GM12878 (cell line): ENCODE measurements at regions of chr7 and their contacts with region 1.

Region 1: GRCh38 chr7:37201003-37201875 is 247.4 kb downstream of the ELMO1 start:
- DNase-seq: no peak
- ATAC-seq: peak; percentile 90
- H3K4me3 ChIP-seq: no peak overlapping the region
- H3K27ac ChIP-seq: no peak overlapping the region
- H3K4me1 ChIP-seq: 0 out of 2 replicates have a peak, but pooled peaks cover 3% of the 10 kb centered on the region
- H3K27me3 ChIP-seq: no peaks in the 10 kb centered on the region
- CTCF ChIP-seq: peak; percentile 76 to 85 (median 80)
- EP300 ChIP-seq: no peak
- POLR2A ChIP-seq: no peak
- RAD21 ChIP-seq: peak; percentile 69

Region 2: GRCh38 chr7:36440880-36441279 is 760.4 kb before region 1 on chr7:
- CTCF ChIA-PET with region 1: interaction called, 22 read pairs
- POLR2A ChIA-PET with region 1: no interaction called
- RAD21 ChIA-PET with region 1: interaction called, 4 read pairs
- SMC1A ChIA-PET with region 1: interaction called, 3 read pairs
- in situ Hi-C with region 1: no loop called
- intact Hi-C with region 1: no loop called
- DNase-seq: no peak
- ATAC-seq: no peak
- H3K4me3 ChIP-seq: no peak overlapping the region
- H3K27ac ChIP-seq: no peak overlapping the region
- H3K4me1 ChIP-seq: no peaks in the 10 kb centered on the region
- H3K27me3 ChIP-seq: no peaks in the 10 kb centered on the region
- CTCF ChIP-seq: peak; percentile 15 to 32 (median 23); a peak in 3 of 6 replicates
- EP300 ChIP-seq: no peak
- POLR2A ChIP-seq: no peak
- RAD21 ChIP-seq: peak; percentile 30; the same call in 1 of the 2 replicates

Region 3: GRCh38 chr7:36473454-36474282 is 727.6 kb before region 1 on chr7:
- CTCF ChIA-PET with region 1: interaction called, 29 read pairs
- POLR2A ChIA-PET with region 1: no interaction called
- RAD21 ChIA-PET with region 1: interaction called, 3 read pairs
- SMC1A ChIA-PET with region 1: interaction called, 3 read pairs
- in situ Hi-C with region 1: no loop called
- intact Hi-C with region 1: loop called (anchors 5 kb)
- DNase-seq: no peak
- ATAC-seq: peak; percentile 82
- H3K4me3 ChIP-seq: no peak overlapping the region
- H3K27ac ChIP-seq: no peak overlapping the region
- H3K4me1 ChIP-seq: no peaks in the 10 kb centered on the region
- H3K27me3 ChIP-seq: no peaks in the 10 kb centered on the region
- CTCF ChIP-seq: peak; percentile 50 to 55 (median 54)
- EP300 ChIP-seq: no peak
- POLR2A ChIP-seq: no peak
- RAD21 ChIP-seq: peak; percentile 59

Region 4: GRCh38 chr7:36487756-36488336 is 713.4 kb before region 1 on chr7:
- CTCF ChIA-PET with region 1: interaction called, 35 read pairs
- POLR2A ChIA-PET with region 1: no interaction called
- RAD21 ChIA-PET with region 1: interaction called, 13 read pairs
- SMC1A ChIA-PET with region 1: interaction called, 10 read pairs
- in situ Hi-C with region 1: loop called (anchors 5 kb)
- intact Hi-C with region 1: loop called (anchors 1 kb)
- DNase-seq: peak; percentile 21
- ATAC-seq: peak; percentile 57; the same call in 2 of the 3 replicates
- H3K4me3 ChIP-seq: no peak overlapping the region
- H3K27ac ChIP-seq: no peak overlapping the region
- H3K4me1 ChIP-seq: no peaks in the 10 kb centered on the region
- H3K27me3 ChIP-seq: no peaks in the 10 kb centered on the region; a peak in 1 of 4 replicates
- CTCF ChIP-seq: peak; percentile 57 to 77 (median 65); a peak in 5 of 6 replicates
- EP300 ChIP-seq: no peak
- POLR2A ChIP-seq: no peak
- RAD21 ChIP-seq: peak; percentile 84

Region 5: DNA sequence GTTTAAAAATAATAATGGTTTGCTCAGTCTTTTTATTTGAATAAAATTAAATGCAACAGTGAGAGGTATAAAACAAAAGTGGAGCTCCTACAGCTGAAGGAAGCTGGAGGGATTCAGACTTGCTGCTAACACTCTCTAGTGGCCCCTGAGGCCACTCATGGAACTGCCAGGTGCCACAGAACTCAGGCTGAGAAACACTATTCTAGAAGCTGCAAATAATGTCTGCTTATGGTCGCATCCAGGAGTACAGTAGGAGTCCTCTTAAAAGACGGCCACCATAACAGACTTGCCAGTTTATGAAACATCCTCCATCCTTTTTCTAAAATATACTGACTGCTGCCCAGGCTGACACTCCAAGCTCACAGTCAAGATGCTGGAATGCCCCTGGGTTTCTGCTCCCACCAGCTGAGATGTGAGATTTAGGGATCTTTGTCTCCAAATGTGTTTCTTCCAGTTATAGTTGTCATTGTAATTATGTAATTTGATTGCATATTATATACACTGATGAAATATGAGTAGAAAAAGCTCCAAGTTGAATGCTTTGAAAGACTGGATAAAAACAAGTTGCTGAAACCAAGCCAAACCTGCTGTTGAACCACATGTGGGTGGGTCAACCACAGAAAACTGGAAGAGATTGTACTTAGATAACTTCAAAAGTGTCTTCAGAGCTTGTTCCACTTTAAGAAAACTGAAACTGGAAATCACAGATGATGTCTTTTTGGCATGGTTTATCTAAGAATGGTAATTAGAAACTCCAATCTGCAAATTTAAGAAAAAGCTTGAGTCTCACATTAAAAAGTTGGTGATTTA is 263.3 kb before region 1 on chr7:
- CTCF ChIA-PET with region 1: no interaction called
- POLR2A ChIA-PET with region 1: no interaction called
- RAD21 ChIA-PET with region 1: no interaction called
- SMC1A ChIA-PET with region 1: no interaction called
- in situ Hi-C with region 1: no loop called
- intact Hi-C with region 1: no loop called
- DNase-seq: no peak
- ATAC-seq: no peak
- H3K4me3 ChIP-seq: no peak overlapping the region
- H3K27ac ChIP-seq: no peak overlapping the region
- H3K4me1 ChIP-seq: peaks cover 12% of the 10 kb centered on the region
- H3K27me3 ChIP-seq: no peaks in the 10 kb centered on the region
- CTCF ChIP-seq: 0 out of 6 replicates have a peak, but pooled peaks of 1 of the 3 experiments have one; percentile 7
- EP300 ChIP-seq: no peak
- POLR2A ChIP-seq: no peak
- RAD21 ChIP-seq: no peak

Region 6: DNA sequence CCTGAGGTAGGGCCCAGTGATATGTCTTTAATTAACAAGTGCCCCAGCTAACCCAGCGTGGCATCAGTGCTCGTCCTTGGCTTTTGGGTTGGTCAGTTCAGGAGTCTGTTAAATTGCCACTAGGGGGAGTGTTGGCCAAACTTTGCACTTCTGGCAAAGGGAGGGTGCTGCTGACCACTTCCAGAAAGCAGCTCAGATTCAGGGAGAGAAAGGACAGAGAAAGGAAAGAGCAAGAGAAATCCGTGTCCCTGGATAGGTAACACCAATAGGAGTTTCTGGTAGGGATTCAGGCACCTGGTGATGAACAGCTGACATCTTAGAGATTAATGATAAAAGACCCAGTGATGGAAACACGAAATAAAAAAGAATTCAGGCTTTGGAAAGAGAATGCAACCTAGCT is 233.9 kb before region 1 on chr7:
- CTCF ChIA-PET with region 1: interaction called, 10 read pairs
- POLR2A ChIA-PET with region 1: no interaction called
- RAD21 ChIA-PET with region 1: no interaction called
- SMC1A ChIA-PET with region 1: interaction called, 6 read pairs
- in situ Hi-C with region 1: no loop called
- intact Hi-C with region 1: no loop called
- DNase-seq: no peak
- ATAC-seq: peak; percentile 98
- H3K4me3 ChIP-seq: no peak overlapping the region
- H3K27ac ChIP-seq: no peak overlapping the region
- H3K4me1 ChIP-seq: no peaks in the 10 kb centered on the region
- H3K27me3 ChIP-seq: no peaks in the 10 kb centered on the region
- CTCF ChIP-seq: peak; percentile 51 to 70 (median 53)
- EP300 ChIP-seq: no peak
- POLR2A ChIP-seq: no peak
- RAD21 ChIP-seq: no peak

Region 7: GRCh38 chr7:37027557-37028341 is 173.5 kb before region 1 on chr7:
- CTCF ChIA-PET with region 1: interaction called, 36 read pairs
- POLR2A ChIA-PET with region 1: no interaction called
- RAD21 ChIA-PET with region 1: interaction called, 5 read pairs
- SMC1A ChIA-PET with region 1: interaction called, 4 read pairs
- in situ Hi-C with region 1: no loop called
- intact Hi-C with region 1: no loop called
- DNase-seq: no peak
- ATAC-seq: no peak
- H3K4me3 ChIP-seq: no peak overlapping the region
- H3K27ac ChIP-seq: no peak overlapping the region
- H3K4me1 ChIP-seq: no peaks in the 10 kb centered on the region
- H3K27me3 ChIP-seq: no peaks in the 10 kb centered on the region
- CTCF ChIP-seq: peak in 1 of 3 experiments; percentile 29; a peak in 2 of 6 replicates
- EP300 ChIP-seq: no peak
- POLR2A ChIP-seq: no peak
- RAD21 ChIP-seq: peak; percentile 51; the same call in 1 of the 2 replicates

Region 8: DNA sequence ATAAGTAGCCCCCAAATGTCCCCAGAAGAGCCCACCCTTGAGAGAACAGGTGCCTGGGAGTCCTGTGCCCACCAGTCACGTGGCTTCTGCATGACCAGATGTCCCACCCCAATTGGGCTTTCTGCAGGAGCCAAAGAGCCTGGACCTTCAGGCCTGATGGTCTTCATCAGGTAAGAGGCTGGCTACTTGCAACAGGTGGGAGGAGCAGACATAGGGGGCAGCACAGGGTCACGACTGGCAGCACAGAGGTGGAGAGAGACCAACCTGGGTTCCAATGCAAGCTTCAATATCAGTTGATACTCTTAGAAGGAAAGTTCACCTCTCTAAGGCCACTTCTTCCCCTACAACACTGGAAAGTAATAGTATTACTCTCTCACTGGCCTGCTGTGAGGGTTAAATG is 40.6 kb before region 1 on chr7:
- CTCF ChIA-PET with region 1: no interaction called
- POLR2A ChIA-PET with region 1: no interaction called
- RAD21 ChIA-PET with region 1: no interaction called
- SMC1A ChIA-PET with region 1: no interaction called
- in situ Hi-C with region 1: no loop called
- intact Hi-C with region 1: no loop called
- DNase-seq: no peak
- ATAC-seq: no peak
- H3K4me3 ChIP-seq: no peak overlapping the region
- H3K27ac ChIP-seq: no peak overlapping the region
- H3K4me1 ChIP-seq: no peaks in the 10 kb centered on the region
- H3K27me3 ChIP-seq: no peaks in the 10 kb centered on the region
- CTCF ChIP-seq: no peak
- EP300 ChIP-seq: no peak
- POLR2A ChIP-seq: no peak
- RAD21 ChIP-seq: no peak

Region 9: GRCh38 chr7:37882086-37882485 is 680.8 kb after region 1 on chr7:
- CTCF ChIA-PET with region 1: no interaction called
- POLR2A ChIA-PET with region 1: no interaction called
- RAD21 ChIA-PET with region 1: no interaction called
- SMC1A ChIA-PET with region 1: no interaction called
- in situ Hi-C with region 1: no loop called
- intact Hi-C with region 1: no loop called
- DNase-seq: no peak
- ATAC-seq: no peak
- H3K4me3 ChIP-seq: no peak overlapping the region
- H3K27ac ChIP-seq: no peak overlapping the region
- H3K4me1 ChIP-seq: no peaks in the 10 kb centered on the region
- H3K27me3 ChIP-seq: no peaks in the 10 kb centered on the region
- CTCF ChIP-seq: no peak
- EP300 ChIP-seq: no peak
- POLR2A ChIP-seq: no peak
- RAD21 ChIP-seq: no peak